Left ventricle myocardium inferior (tissue), 1 donor: ENCODE measurements at regions of chr7 and their contacts with region 1.

Region 1: DNA sequence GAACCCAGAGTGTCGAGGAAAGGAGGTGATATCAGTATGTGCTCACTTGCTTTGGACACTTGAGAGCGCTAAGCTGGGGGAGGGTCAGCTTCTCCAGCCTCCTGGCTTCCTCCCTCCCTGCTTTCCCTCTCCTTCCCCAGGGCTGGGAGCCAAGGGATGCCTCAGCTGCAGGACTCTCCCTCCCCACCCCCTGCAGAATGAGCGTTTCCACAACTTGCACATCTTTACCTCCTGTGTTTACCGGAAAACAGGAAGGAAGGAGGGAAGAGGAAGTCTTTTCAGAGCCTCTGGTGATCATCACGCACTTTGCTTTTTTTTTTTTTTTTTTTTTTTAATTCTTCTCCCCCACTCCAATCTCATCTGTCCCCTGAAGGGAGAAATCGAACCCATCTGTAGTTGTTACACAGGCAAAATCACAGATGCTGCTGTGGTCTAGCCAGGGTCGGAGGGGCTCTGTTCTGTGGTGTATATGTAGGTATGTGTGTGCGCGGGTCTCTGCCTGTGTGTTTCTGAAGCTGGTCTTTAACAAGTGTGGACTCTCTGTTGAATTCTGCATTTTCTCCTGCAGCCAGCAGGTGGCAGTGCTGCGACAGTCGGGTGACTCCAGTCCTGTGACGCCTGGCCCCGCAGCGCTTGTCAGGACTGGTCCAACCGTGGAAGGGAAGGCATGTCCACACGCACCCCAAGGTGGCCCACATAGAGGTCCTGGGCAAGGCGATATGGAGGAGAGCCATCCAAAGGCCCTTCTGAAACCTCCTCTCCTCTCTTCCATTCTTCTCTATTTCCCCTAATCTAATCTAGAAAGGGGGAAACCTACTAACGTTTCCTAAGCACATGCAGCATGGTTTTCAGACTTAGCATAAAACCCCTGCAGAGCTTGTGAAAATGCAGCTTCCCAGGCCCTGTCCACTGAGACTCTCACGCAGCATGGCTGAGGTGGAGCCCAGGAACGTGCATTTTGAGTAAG is 257.6 kb downstream of the PLXNA4 start:
- DNase-seq: peak; percentile 84
- H3K4me3 ChIP-seq: peak overlapping the region; percentile 30
- H3K27ac ChIP-seq: no peak overlapping the region
- H3K4me1 ChIP-seq: peaks cover 15% of the 10 kb centered on the region
- H3K27me3 ChIP-seq: peaks cover 15% of the 10 kb centered on the region
- CTCF ChIP-seq: peak; percentile 92

Region 2: DNA sequence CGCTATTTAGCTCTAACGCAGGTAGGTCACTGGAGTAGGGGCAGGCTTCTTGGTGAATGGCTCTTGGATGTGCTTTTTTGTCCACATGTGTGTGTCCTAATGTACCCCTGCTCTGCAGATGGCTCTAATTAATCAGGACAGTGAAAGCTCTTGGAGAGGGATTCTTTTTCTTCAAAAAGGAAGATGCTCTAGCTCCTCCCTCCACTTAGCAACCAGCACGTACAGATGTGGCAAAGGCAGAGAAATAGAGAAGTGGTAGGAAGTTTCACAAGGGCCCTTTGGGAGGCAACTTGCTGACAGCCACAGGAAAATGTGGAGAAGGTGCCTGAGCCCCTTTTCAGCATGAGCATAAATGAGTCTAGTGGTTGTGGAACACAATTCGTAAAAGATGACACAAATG is 35.9 kb after region 1 on chr7:
- intact Hi-C with region 1: no loop called
- DNase-seq: no peak
- H3K4me3 ChIP-seq: no peak overlapping the region
- H3K27ac ChIP-seq: no peak overlapping the region
- H3K4me1 ChIP-seq: peaks cover 19% of the 10 kb centered on the region
- H3K27me3 ChIP-seq: no peaks in the 10 kb centered on the region
- CTCF ChIP-seq: no peak

Region 3: GRCh38 chr7:132500727-132501440 is 182.2 kb after region 1 on chr7:
- intact Hi-C with region 1: loop called (anchors 10 kb)
- DNase-seq: peak; percentile 71
- H3K4me3 ChIP-seq: no peak overlapping the region
- H3K27ac ChIP-seq: peak overlapping the region; percentile 2
- H3K4me1 ChIP-seq: peaks cover 39% of the 10 kb centered on the region
- H3K27me3 ChIP-seq: no peaks in the 10 kb centered on the region
- CTCF ChIP-seq: peak; percentile 65

Region 4: GRCh38 chr7:132580717-132581285 is 262.2 kb after region 1 on chr7:
- intact Hi-C with region 1: loop called (anchors 5 kb)
- DNase-seq: peak; percentile 64
- H3K4me3 ChIP-seq: no peak overlapping the region
- H3K27ac ChIP-seq: no peak overlapping the region
- H3K4me1 ChIP-seq: peaks cover 14% of the 10 kb centered on the region
- H3K27me3 ChIP-seq: peaks cover 23% of the 10 kb centered on the region
- CTCF ChIP-seq: peak; percentile 81